CD4-positive, alpha-beta memory T cell (primary cell): ENCODE measurements at regions of chr12 and their contacts with region 1.

Region 1: DNA sequence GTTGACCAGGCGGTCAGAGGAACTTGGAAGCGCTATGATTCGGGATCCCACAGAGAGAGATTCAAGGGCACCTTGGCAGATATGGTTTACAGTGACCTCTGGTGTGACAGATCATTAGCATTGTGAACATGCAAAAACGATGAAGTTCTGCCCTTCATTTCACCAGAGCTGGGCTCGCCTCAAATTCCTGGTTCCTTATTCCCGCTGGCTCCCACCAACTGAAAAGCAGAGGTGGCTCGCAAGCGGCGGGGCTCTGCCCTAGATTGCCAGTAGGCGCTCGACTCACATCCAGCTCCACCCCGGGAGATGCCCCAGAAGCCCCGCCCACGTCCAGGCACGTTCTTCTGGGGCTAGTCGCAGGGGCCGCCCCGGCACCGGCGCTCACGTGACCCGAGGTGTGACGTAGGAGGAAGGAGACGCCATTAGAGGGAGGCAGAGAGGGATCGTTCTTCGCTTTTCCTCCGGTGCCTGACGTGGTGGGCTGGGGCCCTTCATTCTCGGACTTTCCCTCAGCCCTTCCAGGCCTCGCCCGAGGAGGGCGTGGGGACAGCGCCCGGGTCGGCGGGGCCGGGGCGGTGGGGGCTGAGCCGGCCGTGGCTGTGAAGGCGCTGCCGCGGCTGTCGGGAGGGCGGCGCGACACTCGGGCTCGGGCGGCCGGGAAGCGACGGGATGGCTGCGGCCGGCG is at the start of gene RAB21:
- DNase-seq: peak; percentile 97 to 99 (median 98)
- H3K4me3 ChIP-seq: peak within 1 kb of the TSS; percentile 66 to 82
- H3K4me3 Mint-ChIP-seq: peak within 1 kb of the TSS; percentile 93 to 97 (median 95)
- H3K27ac ChIP-seq: peak within 1 kb of the TSS; percentile 86
- H3K27ac Mint-ChIP-seq: peak within 1 kb of the TSS; percentile 97 to 99 (median 97)
- H3K4me1 ChIP-seq: peaks cover 36% of the 10 kb centered on the region
- H3K4me1 Mint-ChIP-seq: peaks cover 24 to 51% (median 39%) of the 10 kb centered on the region in 4 donors
- H3K27me3 ChIP-seq: peaks cover 3% of the 10 kb centered on the region
- H3K27me3 Mint-ChIP-seq: peaks cover 3 to 17% of the 10 kb centered on the region in 2 donors
- total RNA-seq, gene RAB21: 73.6 to 77.2 TPM

Region 2: DNA sequence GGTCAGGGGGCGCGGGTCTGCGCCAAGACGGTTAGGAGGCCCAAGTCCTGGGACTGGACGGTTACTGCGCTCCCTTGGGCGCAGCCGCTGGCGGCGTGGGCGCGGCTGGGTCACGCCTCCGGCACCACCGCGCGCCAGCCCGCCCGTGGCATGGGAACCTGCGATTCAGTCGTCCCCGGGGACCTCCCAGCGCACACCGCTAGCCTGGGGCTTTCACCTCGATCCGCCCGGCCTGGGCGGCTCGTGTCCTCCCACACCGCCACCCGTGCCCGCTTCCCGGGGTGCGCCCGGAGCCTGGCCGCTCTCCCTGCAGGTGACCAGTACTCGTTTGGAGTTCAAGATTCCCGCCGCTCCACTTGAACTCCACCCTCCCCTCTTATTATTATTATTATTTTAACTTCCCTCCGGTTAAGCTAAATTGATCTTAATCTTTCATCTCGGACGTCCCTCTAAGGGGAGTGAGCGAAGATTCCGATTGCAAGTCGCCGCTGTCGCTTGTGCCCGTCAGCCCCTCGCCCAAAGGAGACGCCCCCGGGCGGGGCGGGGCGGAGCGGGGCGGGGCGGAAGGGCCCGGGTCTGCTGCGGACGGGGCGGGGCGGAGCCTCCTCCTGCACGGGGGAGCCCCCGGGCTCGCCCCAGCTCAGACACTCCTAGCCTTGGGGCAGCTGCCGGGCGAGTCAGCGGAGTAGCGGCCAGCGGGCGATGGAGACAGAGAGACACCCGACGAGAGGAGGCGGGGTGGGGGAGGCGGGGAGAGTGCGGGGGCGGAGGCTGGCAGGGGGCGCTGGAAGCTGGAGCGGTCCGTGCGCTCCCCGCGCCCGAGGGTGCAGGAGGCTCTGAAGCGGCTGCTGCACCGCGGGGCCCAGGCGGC is 1388.7 kb before region 1 on chr12 and contains the start of gene KCNMB4:
- CTCF ChIA-PET with region 1: no interaction called
- POLR2A ChIA-PET with region 1: no interaction called
- intact Hi-C with region 1: loop called (anchors 5 kb)
- DNase-seq: peak; percentile 59 to 78 (median 63)
- H3K4me3 ChIP-seq: peak within 1 kb of the TSS; percentile 11 to 78
- H3K4me3 Mint-ChIP-seq: peak within 1 kb of the TSS; percentile 92 to 99 (median 94)
- H3K27ac ChIP-seq: peak within 1 kb of the TSS; percentile 3
- H3K27ac Mint-ChIP-seq: peak within 1 kb of the TSS in 6 of 7 donors; percentile 65 to 89 (median 85)
- H3K4me1 ChIP-seq: peaks cover 14% of the 10 kb centered on the region
- H3K4me1 Mint-ChIP-seq: peaks cover 8 to 22% (median 18%) of the 10 kb centered on the region in 4 donors
- H3K27me3 ChIP-seq: peaks cover 8% of the 10 kb centered on the region
- H3K27me3 Mint-ChIP-seq: peaks cover 2 to 4% of the 10 kb centered on the region in 2 donors
- total RNA-seq, gene KCNMB4: 0.67 to 1.1 TPM

Region 3: DNA sequence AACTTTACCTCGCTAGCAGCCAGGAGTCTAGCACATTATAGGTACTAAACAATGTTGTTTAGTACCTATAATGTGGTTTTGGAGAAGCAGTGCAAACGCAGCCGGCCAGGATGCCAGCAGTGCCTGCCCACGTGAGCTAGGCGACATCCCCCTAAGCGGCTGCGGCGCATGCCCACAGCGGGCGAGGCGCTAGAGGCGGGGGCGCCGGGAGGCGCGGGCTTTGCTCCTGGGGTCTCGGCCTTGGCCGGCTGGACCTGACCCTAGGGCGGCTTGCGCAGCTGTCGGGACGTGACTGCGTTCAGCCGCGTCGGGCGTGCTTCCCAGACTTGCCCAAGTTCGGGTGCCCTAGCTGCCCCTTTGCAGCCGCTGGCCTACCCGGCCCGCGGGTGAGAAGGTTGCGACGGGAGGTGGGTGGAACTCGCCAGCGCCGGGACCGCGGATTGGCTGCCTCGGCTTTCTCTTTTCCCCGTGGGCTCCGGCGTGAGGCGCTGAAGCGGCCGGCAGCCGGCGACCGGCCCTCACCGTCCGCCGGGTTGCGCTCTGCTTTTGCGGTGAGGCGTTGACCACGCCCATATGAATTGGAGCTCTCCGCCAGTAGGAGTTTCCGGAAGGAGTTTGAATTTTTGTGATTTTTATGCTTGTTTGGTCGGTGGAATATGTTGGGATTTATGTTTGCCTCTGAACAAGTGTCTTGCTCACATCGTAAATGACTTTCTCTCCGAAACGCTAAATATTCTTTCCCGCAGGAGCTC is 68.5 kb before region 1 on chr12 and contains the start of gene TMEM19:
- CTCF ChIA-PET with region 1: interaction called, 5 read pairs
- POLR2A ChIA-PET with region 1: interaction called, 28 read pairs
- intact Hi-C with region 1: loop called (anchors 1 kb)
- DNase-seq: peak; percentile 82 to 86 (median 84)
- H3K4me3 ChIP-seq: peak within 1 kb of the TSS; percentile 47 to 73
- H3K4me3 Mint-ChIP-seq: peak within 1 kb of the TSS; percentile 92 to 99 (median 96)
- H3K27ac ChIP-seq: peak within 1 kb of the TSS; percentile 72
- H3K27ac Mint-ChIP-seq: peak within 1 kb of the TSS; percentile 80 to 98 (median 95)
- H3K4me1 ChIP-seq: peaks cover 27% of the 10 kb centered on the region
- H3K4me1 Mint-ChIP-seq: peaks cover 10 to 32% (median 17%) of the 10 kb centered on the region in 4 donors
- H3K27me3 ChIP-seq: no peaks in the 10 kb centered on the region
- H3K27me3 Mint-ChIP-seq: no peaks in the 10 kb centered on the region
- total RNA-seq, gene TMEM19: 10.5 to 14.1 TPM

Region 4: DNA sequence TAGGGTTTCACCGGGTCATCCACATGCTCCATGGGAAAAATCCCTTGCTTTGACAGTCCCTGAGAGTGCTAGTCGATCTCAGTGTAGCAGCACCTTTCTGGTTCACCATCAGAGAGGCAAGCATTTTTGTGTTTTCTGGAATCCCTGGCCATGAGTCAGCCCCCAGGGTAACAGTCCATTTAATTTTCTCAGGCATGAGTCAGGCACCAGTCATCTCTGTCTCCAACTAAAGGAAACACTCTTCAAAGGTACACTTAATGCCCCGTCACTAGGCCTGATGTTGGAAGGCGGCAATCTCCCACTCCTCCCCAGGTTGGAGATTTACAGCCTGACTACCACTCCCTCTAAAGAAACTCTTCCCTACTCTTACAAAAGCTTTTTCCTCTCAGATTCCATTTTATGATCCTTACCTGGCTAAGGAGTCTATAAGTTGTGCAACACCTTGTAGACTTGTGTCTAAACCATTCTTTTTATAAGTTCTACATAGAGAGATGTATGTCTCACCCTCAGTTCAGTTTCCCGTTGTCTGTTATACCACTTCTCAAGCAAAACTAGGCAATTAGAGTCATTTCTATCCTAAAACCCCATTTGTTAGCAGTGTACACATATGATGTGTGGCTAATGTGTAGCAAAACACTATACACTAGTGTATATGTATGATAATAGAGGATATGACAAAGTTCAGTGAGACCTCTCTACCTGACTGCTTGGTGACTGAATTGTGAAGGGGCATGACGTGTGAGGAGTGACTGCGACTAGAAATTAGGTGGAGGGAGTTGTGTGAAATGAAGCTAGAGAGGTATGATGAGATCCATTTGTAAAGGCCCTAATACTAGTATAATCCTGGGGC is 44.1 kb before region 1 on chr12:
- CTCF ChIA-PET with region 1: no interaction called
- POLR2A ChIA-PET with region 1: no interaction called
- intact Hi-C with region 1: no loop called
- DNase-seq: no peak
- H3K4me3 ChIP-seq: no peak overlapping the region
- H3K4me3 Mint-ChIP-seq: no peak overlapping the region
- H3K27ac ChIP-seq: no peak overlapping the region
- H3K27ac Mint-ChIP-seq: no peak overlapping the region
- H3K4me1 ChIP-seq: no peaks in the 10 kb centered on the region
- H3K4me1 Mint-ChIP-seq: peaks cover 4 to 11% (median 8%) of the 10 kb centered on the region in 4 donors
- H3K27me3 ChIP-seq: no peaks in the 10 kb centered on the region
- H3K27me3 Mint-ChIP-seq: no peaks in the 10 kb centered on the region